ENCODE measurements at regions of chr11 and their contacts with region 1.

Region 1: DNA sequence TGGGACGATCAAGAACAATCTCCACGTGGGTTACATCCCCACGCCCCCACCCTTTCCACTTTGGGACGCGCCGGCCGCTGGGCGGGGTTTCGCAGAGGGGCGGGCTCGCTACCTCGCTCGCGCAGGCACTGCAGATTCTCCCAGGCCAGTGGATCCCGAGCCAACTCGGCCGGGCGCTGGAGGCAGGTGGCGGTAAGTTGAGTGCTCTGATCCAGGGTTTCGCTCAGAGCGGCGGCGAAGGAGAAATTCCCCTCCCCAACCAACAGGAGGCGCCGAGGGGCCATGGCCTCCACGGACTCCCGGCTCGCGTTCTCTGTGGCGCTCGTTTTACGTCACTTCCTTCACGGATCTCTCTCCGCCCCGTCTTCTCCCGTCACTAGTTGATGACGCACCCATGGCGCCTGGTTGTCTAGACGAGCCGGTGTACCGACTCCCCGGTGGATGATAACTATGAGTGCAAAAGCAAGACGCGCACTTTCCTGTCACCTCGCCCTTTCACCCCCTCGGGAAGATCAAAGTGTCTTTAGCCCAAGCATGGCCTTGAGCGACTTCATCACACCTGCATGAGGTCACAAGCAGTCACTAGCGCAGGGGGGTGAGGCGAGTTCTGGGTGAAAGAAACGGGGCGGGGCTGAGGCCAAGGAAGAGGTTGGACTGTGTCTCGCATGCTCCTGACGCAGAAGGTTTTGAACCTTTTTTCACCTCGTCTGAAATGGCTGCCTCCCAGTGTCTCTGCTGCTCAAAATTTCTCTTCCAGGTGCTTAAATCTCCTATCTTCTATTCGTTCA is at the starts of genes CFAP68 and FDXACB1:
- DNase-seq: peak; percentile 96 to 98 (median 98)
- ATAC-seq: peak; percentile 96
- H3K4me3 ChIP-seq: peak within 1 kb of the TSS; percentile 52 to 73
- H3K27ac ChIP-seq: peak within 1 kb of the TSS; percentile 92 to 97
- H3K4me1 ChIP-seq: peaks cover 5 to 19% of the 10 kb centered on the region in 2 donors
- H3K27me3 ChIP-seq: no peaks in the 10 kb centered on the region
- CTCF ChIP-seq: peak; percentile 89 to 98
- polyA plus RNA-seq, gene CFAP68: 36.1 to 46.7 (median 38.6) TPM
- polyA plus RNA-seq, gene FDXACB1: 4.3 to 5.5 (median 4.9) TPM

Region 2: DNA sequence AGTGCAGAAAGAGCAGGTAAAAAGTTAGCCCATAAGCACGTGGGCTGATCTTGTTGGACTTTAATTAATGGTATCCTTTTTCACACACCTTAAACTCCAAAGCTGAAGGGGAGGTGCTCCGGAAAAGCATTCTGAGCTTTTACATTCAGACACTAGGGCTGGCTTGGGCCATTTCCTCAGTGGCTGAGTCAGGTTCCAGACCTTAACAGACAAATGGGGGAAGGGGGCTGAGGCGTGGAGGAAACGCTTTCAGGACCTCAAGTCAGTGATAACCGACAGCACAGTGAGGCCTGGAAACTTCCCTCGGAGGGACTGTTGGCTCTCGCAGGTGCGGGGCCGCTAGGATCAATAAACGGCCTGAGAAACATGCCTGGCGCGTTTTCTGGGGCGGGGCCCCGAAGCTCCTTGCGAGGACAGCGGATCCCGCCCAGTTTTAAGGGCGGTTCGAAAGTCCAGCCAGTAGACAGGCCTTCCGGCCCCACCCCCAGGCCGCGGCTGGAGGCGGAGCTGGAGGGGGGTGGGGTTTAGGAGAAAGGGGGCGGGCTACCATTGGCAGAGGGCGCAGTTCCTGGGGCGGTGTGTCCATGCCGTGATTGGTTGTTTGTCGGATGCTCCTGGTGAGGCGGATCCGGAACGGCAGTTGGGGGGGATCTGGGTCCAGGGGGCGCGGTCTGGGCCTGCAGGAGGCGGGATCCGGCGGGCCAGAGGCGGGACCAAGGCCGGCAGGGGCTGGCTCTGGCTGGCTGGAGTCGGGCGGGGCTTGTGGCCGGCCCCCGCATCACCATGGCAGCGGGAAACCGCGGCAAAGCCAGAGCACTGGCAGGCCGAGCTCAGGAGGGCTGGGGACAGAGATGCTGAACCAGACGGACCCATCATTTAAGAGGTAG is 47.7 kb after region 1 on chr11:
- intact Hi-C with region 1: loop called in 1 of 2 experiments (anchors 10 kb)
- DNase-seq: peak; percentile 94 to 99 (median 98)
- ATAC-seq: peak; percentile 94
- H3K4me3 ChIP-seq: peak overlapping the region; percentile 24 to 41
- H3K27ac ChIP-seq: peak overlapping the region; percentile 84 to 88
- H3K4me1 ChIP-seq: peaks cover 21 to 25% of the 10 kb centered on the region in 2 donors
- H3K27me3 ChIP-seq: no peaks in the 10 kb centered on the region
- CTCF ChIP-seq: no peak

Region 3: DNA sequence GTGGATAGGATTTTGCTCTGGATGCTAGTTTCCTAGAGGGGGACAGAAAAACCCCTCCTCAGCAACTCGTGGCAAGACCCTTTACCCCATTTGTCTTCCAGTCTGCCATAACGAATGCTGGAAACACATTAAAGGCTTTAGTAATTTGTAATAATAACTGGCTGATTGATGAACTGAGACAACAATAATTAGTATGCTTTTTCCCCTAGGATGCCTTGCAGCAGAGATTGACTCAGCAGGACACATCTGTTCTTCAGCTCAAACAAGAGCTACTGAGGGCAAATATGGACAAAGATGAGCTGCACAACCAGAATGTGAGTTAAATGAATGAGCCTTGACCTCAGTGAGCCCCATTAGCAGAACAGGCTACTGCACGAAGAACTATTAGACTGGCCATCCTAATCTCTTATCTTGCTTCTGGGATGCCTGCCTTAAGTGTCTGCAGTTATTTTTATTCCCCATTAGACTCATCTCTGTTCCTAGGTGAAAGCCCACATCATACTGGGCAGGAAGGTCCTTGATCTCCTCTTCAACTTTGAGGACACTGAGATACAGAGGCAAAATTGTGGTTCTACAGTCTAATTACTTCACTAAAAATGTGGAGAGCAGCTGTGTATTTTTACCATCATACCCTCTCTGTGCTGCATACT is 113.3 kb after region 1 on chr11:
- intact Hi-C with region 1: no loop called
- DNase-seq: no peak
- ATAC-seq: no peak
- H3K4me3 ChIP-seq: no peak overlapping the region
- H3K27ac ChIP-seq: no peak overlapping the region
- H3K4me1 ChIP-seq: peaks cover 0 to 3% of the 10 kb centered on the region in 2 donors
- H3K27me3 ChIP-seq: no peaks in the 10 kb centered on the region
- CTCF ChIP-seq: no peak